ENCODE measurements at regions of chr2 and their contacts with region 1.

Region 1: DNA sequence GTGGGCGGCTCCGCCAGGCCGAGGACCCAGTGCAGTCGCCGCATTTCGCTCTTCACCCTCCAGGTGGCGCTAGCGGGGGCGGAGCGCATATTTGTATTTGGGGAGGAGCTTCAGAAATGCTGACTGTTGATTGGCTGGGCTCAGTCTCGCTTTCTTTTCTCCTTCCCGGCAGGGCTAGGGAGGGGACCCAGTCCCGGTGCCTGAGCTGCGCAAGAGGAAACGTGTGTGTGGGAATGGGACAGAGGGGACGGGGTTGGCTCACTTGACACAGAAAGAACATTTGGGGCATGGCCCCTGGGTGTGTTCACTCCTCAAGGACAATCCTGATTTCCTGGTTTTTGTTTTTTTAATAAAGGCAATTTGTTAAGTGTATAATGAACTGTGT is 20.3 kb upstream of the DNMT3A start:
- DNase-seq: peak; percentile 94
- CTCF ChIP-seq: peak; percentile 91

Region 2: GRCh38 chr2:25342372-25343186 is 19.5 kb before region 1 on chr2:
- CTCF ChIA-PET with region 1: interaction called, 44 read pairs
- POLR2A ChIA-PET with region 1: interaction called, 4 read pairs
- DNase-seq: peak; percentile 93
- CTCF ChIP-seq: peak; percentile 96

Region 3: GRCh38 chr2:25388491-25388890 is 26.4 kb after region 1 on chr2:
- CTCF ChIA-PET with region 1: interaction called, 30 read pairs
- POLR2A ChIA-PET with region 1: interaction called, 3 read pairs
- DNase-seq: no peak
- CTCF ChIP-seq: no peak

Region 4: DNA sequence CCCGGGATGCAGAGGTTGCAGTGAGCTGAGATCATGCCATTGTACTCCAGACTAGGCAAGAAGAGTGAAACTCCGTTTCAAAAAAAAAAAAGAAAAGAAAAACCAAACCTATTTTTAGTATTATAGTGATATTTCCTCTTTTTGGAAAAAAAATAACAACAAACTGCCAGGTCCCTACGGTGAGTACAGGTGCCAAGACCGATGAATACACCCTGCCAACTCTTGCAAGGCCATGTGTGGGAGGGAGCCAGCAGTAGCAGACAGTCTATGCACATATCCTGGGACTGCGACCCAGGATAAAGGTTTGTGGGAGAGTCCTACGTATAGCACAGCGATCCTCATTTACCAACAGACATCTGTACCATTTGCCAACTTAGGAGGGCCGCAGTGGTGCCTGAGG is 49.2 kb after region 1 on chr2:
- CTCF ChIA-PET with region 1: interaction called, 31 read pairs
- POLR2A ChIA-PET with region 1: interaction called, 6 read pairs
- DNase-seq: no peak
- CTCF ChIP-seq: no peak

Region 5: DNA sequence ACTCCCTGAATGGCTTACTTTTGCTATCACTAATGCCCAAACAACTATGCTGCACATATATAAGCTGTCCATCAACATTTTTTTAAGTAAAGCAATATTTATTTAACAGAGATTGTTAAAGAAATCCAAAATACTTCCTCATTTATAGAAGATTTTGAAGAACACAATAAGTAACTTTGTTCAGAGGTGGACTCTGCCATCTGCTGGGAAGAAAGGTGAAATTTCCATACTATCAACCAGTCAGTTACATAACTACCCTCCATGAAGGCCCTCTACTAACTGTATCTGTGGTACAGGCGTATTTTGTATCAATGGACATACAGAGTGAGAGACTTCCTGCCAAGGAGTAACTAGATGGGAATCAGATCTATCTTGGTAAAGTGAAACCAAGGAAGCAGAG is 205.4 kb after region 1 on chr2:
- CTCF ChIA-PET with region 1: interaction called, 14 read pairs
- POLR2A ChIA-PET with region 1: interaction called, 4 read pairs
- DNase-seq: peak; percentile 63
- CTCF ChIP-seq: peak; percentile 49

Measured in GM10248 (cell line).